AG04449 (cell line): ENCODE measurements at regions of chr9 and their contacts with region 1.

Region 1: GRCh38 chr9:113657703-113658544 is 194.4 kb downstream of the RGS3 start:
- DNase-seq: no peak
- H3K4me3 ChIP-seq: no peak overlapping the region
- CTCF ChIP-seq: peak; percentile 96

Region 2: GRCh38 chr9:113309204-113309813 is 348.6 kb before region 1 on chr9:
- CTCF ChIA-PET with region 1: interaction called, 48 read pairs
- POLR2A ChIA-PET with region 1: no interaction called
- DNase-seq: no peak
- H3K4me3 ChIP-seq: no peak overlapping the region
- CTCF ChIP-seq: peak; percentile 55

Region 3: DNA sequence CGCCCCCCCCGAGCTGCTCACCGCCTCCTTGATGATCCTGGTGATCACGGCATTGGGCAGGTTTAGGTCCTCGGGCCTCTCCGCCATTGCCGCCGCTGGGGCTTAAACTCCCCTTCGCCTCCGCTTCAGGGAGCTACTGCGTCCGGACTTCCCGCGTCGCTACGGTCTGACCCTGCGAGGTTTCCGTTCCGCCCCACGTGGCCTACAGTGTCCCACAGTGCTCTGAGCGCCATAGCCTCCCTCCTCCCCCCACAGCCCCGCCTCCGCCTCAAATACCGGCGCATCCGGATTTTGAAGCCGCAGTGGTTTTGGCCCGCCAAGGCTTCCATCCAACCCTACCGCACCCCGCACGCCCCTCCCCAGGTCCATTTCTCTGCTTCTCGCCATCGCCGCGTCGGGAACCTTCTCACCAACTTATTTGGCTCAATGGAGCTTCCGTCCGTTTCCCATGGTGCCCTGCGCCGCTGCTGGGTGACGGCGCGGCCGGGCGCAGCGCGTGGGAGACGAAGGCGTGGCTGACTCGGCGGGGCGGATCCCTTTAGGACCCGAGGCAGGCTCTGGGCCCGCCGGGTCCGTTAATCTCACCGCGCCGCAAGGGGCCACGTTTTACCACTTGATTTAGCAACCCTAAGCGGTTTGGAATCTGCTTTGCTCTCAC is 247.6 kb before region 1 on chr9 and contains the starts of genes C9orf43 and POLE3:
- CTCF ChIA-PET with region 1: interaction called, 135 read pairs
- POLR2A ChIA-PET with region 1: interaction called, 7 read pairs
- DNase-seq: peak; percentile 59
- H3K4me3 ChIP-seq: peak within 1 kb of the TSS; percentile 88
- CTCF ChIP-seq: no peak

Region 4: GRCh38 chr9:113454914-113455761 is 202.8 kb before region 1 on chr9:
- CTCF ChIA-PET with region 1: interaction called, 482 read pairs
- POLR2A ChIA-PET with region 1: no interaction called
- DNase-seq: peak; percentile 67
- H3K4me3 ChIP-seq: no peak overlapping the region
- CTCF ChIP-seq: no peak

Region 5: GRCh38 chr9:113564498-113565237 is 93.3 kb before region 1 on chr9:
- CTCF ChIA-PET with region 1: interaction called, 38 read pairs
- POLR2A ChIA-PET with region 1: interaction called, 4 read pairs
- DNase-seq: no peak
- H3K4me3 ChIP-seq: peak overlapping the region; percentile 74
- CTCF ChIP-seq: peak; percentile 6

Region 6: GRCh38 chr9:113614843-113615648 is 42.9 kb before region 1 on chr9:
- CTCF ChIA-PET with region 1: interaction called, 1,449 read pairs
- POLR2A ChIA-PET with region 1: no interaction called
- DNase-seq: no peak
- H3K4me3 ChIP-seq: peak overlapping the region; percentile 18
- CTCF ChIP-seq: no peak

Region 7: DNA sequence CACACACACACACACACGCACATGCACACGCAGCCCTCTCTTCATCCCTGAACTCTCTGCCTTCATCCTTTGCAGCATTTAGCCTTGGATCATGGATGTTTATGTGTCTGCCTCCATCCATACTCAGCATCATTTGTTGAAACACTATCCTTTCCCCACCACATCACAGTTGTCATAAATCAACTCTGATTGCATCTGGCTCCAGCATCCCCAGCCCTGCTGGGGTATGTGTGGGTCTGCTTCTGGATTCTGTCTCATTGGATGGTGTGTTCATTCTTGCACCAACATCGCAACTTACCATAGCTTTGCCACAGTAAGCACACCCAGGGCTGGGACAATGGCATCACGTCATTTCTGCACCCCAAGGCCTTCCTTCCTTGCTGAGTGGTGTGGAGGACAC is 19.0 kb before region 1 on chr9:
- CTCF ChIA-PET with region 1: interaction called, 33 read pairs
- POLR2A ChIA-PET with region 1: no interaction called
- DNase-seq: no peak
- H3K4me3 ChIP-seq: no peak overlapping the region
- CTCF ChIP-seq: no peak